GM18951 (cell line): ENCODE measurements at regions of chr15 and their contacts with region 1.

Region 1: DNA sequence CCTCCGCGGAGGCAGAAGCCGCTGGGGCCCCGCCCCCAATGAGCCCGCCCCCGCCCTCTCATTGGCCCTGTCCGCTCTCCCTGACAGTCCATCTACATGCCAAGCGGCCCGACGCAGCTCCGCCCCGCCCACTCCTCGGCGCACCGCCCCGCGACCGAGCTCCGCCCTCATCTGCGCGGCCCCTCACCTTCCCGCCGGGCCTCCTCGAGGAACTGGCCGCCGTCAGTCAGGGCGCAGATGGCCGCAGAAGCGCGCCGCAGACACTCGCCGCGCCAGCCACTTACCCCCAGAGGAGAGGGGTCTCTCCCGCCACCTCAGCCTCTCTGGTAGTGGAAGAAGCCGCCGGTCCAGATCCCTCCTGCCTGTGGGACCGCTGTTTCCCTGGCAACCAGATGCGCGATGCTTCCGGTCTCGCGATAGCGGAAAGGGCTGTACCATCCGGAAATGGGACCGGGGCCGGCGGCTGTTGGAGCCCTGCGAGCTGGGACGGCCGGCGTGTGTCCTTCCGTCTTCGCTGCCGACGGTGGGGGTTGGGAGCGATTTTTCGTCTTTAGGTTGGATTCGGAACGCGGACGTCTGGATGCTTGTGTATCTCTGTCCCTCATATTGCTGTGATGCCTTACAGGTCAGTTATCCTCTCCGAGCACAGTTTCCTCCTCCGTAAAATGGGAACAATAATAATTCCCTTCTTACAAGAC is at the start of gene FSIP1:
- POLR2A ChIP-seq: peak; percentile 88

Region 2: DNA sequence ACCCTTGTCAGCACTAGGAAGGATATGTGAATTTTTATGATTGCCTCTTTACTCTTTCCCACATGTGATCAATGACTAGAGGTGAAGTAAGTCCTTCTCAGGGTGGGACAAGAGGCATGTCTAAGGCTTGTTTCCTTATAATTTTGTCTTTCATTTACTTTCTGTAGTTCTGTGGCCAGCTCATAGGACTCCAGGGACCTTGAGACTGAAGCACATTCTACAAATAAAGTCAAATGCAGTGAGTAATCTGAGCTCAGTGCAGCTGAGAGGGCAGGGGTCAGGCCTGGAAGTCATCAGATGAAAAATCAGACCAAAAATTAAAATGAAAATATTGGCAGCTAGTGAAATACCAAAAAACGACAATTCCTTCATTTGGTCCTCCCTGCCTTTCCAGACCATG is 626.4 kb before region 1 on chr15:
- in situ Hi-C with region 1: no loop called
- POLR2A ChIP-seq: no peak

Region 3: GRCh38 chr15:39874890-39875549 is 92.4 kb after region 1 on chr15:
- in situ Hi-C with region 1: loop called (anchors 10 kb)
- POLR2A ChIP-seq: no peak

Region 4: DNA sequence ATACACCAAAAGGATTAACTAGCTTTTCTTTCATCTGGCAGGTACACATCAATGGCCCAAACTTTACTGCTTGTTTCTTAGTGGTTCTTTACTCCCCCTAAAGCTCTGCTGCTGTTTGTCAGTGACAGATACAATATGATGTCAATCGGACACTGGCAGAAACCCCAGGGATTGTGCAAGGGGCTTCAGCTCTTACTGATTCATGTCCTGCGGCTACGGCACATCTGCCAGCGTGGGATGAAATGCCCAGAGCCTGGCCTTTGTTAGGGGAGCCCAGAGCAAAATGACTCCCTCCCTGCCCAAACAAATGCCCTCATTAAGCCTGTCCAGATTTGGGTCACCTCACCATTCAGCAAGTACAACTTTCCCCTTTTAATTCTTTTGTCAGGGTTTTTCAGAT is 228.1 kb after region 1 on chr15:
- in situ Hi-C with region 1: loop called (anchors 25 kb)
- POLR2A ChIP-seq: no peak

Region 5: DNA sequence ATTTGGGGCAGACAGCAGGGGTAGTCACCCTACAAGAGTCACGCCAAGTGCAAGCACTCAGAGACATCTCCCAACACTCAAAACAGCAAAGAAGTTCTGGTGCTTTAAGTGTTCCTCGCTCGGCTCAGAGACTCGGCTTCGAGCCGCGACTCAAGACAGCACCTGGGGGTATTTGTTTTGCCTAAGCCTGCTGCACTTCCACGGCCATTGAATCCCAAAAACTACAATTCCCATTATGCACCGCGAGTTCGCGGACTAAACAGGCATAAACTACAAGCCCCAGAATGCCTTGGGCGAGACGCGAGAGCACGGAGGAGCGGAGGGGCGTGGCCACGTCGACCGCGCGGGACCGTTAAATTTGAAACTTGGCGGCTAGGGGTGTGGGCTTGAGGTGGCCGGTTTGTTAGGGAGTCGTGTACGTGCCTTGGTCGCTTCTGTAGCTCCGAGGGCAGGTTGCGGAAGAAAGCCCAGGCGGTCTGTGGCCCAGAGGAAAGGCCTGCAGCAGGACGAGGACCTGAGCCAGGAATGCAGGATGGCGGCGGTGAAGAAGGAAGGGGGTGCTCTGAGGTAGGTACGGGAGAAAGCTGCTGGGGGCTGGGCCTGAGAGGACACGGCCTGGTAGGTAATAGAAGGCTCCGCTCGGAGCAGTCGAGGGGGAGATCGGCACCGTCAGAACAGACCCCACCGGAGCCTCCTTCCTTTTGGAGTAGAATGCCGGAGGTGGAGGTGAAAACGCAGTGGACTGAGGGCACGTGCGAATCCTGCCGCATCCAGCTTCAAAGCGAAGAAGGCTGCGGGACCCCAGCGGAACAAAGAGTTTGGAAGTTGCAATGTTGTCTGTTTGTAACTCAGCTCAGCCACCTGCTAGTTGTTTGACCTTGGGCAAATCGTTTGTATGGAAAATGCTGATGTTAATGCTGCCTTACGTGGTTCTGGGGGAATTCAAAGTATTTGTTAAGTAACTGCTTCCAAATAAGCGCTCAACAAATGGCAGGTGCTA is 378.4 kb after region 1 on chr15 and contains the start of gene BUB1B:
- in situ Hi-C with region 1: loop called (anchors 25 kb)
- POLR2A ChIP-seq: peak; percentile 69